Left cardiac atrium (tissue), 4 donors: ENCODE measurements at regions of chr10 and their contacts with region 1.

Region 1: DNA sequence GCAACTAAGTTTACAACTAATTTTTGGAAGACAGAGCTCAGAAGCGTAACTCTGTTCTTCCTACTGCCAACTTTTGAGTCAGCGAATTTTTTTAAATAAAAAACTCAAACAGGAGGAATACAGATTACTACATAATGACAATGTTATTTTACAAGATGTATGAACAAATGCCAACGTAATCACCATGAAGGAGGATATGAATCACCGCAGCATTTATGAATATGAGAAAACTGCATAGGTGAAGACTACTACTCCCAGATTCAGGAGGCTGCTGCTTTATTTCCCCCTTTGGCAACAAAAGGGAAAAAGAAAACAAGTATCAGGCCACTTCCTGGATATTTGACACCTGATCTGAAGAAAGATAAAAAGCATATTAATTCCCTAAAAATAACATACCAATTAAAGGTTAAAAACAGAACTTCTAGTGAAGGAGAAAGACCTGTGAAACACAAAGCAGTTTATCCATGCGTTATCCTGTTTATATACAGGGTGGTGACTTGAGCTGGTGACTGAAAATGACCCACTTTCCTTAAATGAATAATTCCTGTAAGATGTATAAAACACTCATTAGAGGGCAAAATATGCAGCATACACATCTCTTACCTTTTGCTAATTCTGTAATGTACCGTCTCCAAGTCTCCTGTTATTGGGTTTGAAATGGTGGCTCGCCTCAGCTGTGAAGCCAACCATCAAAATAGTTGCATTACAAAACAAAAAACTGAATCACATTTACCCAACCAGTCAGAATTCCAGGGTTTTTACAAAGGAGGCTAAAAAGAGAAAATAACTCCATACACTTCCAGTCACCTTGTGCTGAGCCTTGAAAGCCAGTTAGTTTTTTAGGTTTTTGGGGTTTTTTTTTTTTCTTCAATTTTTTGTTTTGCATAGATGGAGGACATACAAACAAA is 52.0 kb downstream of the P4HA1 start:
- DNase-seq: no peak
- ATAC-seq: peak; percentile 53 to 91

Region 2: DNA sequence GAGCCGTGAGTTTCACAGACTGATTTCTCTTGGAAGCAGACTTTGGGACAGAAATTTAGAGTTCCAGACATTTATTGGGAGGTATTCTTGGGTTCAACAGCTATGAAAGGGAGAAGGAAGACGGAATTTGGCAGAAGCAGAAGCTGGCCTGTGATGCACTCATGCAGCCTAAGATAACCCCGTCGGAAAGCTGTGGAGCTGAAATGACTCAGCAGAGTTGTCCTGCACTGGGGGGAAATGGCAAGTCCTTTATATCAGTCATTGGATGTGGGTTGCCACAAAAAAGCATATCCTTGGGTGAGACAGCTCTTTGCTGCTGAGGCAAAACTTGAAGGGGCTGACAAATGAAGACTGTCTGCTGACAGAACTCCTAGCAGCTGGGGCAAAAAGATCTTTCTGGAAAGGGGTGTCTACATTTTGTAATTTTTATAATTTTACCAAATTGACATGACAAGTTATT is 407.2 kb before region 1 on chr10:
- intact Hi-C with region 1: no loop called
- DNase-seq: peak; percentile 59
- ATAC-seq: peak; percentile 97 to 99

Region 3: DNA sequence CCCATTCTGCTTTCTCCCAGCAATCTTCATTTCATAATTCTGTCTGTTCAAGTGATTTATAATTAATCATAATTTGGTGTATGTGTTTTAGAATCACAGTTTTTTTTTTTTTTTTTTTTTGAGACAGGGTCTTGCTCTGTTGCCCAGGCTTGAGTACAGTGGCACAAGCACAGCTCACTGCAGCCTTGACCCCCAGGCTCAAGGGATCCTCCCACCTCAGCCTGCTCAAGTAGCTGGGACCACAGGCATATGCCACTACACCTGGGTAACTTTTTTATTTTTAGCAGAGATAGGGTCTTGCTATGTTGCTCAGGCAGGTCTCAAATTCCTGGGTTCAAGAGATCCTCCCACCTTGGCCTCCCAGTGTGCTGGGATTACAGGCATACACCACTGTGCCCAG is 40.8 kb before region 1 on chr10:
- intact Hi-C with region 1: loop called in 1 of 2 experiments (anchors 5 kb)
- DNase-seq: no peak
- ATAC-seq: no peak

Region 4: GRCh38 chr10:73141603-73142002 is 97.0 kb after region 1 on chr10:
- intact Hi-C with region 1: loop called in 1 of 2 experiments (anchors 10 kb)
- DNase-seq: no peak
- ATAC-seq: no peak